Activated T-helper 1 cell treated with anti-CD3 and anti-CD28 coated beads, Interleukin-12 subunit alpha, Interleukin-12 subunit beta, Interleukin-2, Interleukin-4 antibody, amounts not matched to agents 30 ng/mL and 10 ng/mL and 1 ng/mL, durations not matched to agents 14 hours and 24 hours and 36 hours (primary cell): ENCODE measurements at regions of chr5 and their contacts with region 1.

Region 1: DNA sequence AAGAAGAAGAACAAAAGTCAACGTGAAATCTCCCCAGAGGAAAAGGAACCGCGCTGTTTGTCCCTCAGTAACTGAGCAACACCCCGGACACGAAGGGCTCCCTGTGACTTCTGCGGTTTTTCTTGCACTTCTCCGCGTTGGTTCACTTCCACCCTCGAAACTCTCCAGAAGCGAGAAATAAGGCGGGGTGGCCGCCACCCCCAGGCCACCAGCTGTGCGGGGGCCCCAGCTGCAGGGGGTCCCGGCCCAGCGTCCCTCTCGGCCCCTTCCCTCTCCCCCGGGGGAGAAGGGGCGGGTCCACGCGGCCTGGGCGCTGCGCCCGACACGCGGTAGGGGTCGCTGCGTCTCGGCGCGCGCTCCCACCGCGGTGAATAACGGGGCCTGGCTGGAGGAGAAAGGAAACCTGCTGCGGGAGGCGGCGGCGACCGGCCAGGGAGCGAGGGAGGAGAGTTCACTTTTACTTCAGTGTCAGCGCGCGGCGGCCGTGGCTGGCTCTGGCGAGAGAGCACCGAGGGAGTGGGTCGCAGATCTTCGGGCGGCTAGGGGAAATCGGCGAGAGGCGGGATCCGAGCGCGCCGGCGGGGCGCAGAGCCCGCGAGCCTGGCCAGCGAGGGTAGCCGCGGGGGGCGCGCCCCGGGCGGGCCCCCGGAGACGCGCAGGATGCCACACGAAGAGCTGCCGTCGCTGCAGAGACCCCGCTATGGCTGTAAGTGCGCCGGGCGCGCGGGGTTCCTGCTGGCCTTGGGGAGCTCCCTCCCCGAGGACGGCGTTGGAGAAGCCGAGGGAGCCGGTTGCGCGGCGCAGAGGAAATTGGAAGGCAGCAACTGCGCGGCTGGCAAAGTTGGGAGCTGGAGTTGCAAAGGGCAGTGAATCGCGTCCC is at the start of gene IQGAP2:
- DNase-seq: peak; percentile 79
- H3K4me3 Mint-ChIP-seq: peak within 1 kb of the TSS; percentile 98
- H3K27ac Mint-ChIP-seq: peak within 1 kb of the TSS; percentile 99
- H3K4me1 Mint-ChIP-seq: peaks cover 60% of the 10 kb centered on the region
- H3K27me3 Mint-ChIP-seq: peaks cover 4% of the 10 kb centered on the region
- total RNA-seq, gene IQGAP2: 43.5 and 45.4 TPM in 2 replicates

Region 2: DNA sequence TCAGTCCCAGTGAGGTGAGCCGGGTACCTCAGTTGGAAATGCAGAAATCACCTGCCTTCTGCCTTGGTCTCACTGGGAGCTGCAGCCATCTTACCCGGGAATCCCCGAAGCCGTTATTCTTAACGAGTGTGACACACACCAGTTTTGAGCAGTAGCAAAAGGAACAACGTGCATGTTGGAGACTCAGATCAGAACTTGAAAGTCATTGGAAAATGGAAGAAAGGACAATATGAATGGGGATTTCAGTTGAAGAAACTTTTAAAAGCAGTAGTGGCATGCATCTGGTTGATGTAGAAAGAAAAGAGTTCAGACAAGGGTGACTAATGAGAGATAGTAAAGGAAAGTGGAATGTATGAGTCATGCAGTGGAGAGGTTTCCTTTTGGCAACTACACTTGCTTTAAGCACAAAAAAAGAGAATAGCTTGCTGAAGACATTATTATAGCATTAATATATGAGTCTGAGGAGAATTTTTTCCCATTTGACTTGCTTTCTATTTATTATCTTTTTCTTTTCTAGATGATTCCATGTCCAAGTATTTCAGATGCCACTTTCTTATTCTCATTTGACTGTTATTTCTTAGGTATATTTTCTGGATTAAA is 836.3 kb before region 1 on chr5:
- intact Hi-C with region 1: loop called (anchors 2 kb)
- DNase-seq: peak; percentile 39
- H3K4me3 Mint-ChIP-seq: peak overlapping the region; percentile 29
- H3K27ac Mint-ChIP-seq: peak overlapping the region; percentile 81
- H3K4me1 Mint-ChIP-seq: peaks cover 53% of the 10 kb centered on the region
- H3K27me3 Mint-ChIP-seq: no peaks in the 10 kb centered on the region

Region 3: GRCh38 chr5:76325876-76326491 is 77.1 kb before region 1 on chr5:
- intact Hi-C with region 1: loop called (anchors 1 kb)
- DNase-seq: peak; percentile 50
- H3K4me3 Mint-ChIP-seq: peak overlapping the region; percentile 44
- H3K27ac Mint-ChIP-seq: peak overlapping the region; percentile 84
- H3K4me1 Mint-ChIP-seq: peaks cover 63% of the 10 kb centered on the region
- H3K27me3 Mint-ChIP-seq: no peaks in the 10 kb centered on the region

Region 4: GRCh38 chr5:76386360-76386759 is 16.8 kb before region 1 on chr5:
- intact Hi-C with region 1: no loop called
- DNase-seq: no peak
- H3K4me3 Mint-ChIP-seq: no peak overlapping the region
- H3K27ac Mint-ChIP-seq: no peak overlapping the region
- H3K4me1 Mint-ChIP-seq: peaks cover 37% of the 10 kb centered on the region
- H3K27me3 Mint-ChIP-seq: peaks cover 3% of the 10 kb centered on the region

Region 5: GRCh38 chr5:76433261-76433660 is 30.1 kb after region 1 on chr5:
- intact Hi-C with region 1: no loop called
- DNase-seq: no peak
- H3K4me3 Mint-ChIP-seq: no peak overlapping the region
- H3K27ac Mint-ChIP-seq: no peak overlapping the region
- H3K4me1 Mint-ChIP-seq: peaks cover 16% of the 10 kb centered on the region
- H3K27me3 Mint-ChIP-seq: no peaks in the 10 kb centered on the region

Region 6: GRCh38 chr5:76473661-76474060 is 70.5 kb after region 1 on chr5:
- intact Hi-C with region 1: loop called (anchors 1 kb)
- DNase-seq: peak; percentile 55
- H3K4me3 Mint-ChIP-seq: peak overlapping the region; percentile 47
- H3K27ac Mint-ChIP-seq: peak overlapping the region; percentile 82
- H3K4me1 Mint-ChIP-seq: peaks cover 73% of the 10 kb centered on the region
- H3K27me3 Mint-ChIP-seq: no peaks in the 10 kb centered on the region

Region 7: GRCh38 chr5:76608833-76609232 is 205.7 kb after region 1 on chr5:
- intact Hi-C with region 1: loop called (anchors 2 kb)
- DNase-seq: no peak
- H3K4me3 Mint-ChIP-seq: no peak overlapping the region
- H3K27ac Mint-ChIP-seq: peak overlapping the region; percentile 19
- H3K4me1 Mint-ChIP-seq: peaks cover 31% of the 10 kb centered on the region
- H3K27me3 Mint-ChIP-seq: no peaks in the 10 kb centered on the region

Region 8: GRCh38 chr5:76736679-76737556 is 333.8 kb after region 1 on chr5:
- intact Hi-C with region 1: loop called (anchors 2 kb)
- DNase-seq: no peak
- H3K4me3 Mint-ChIP-seq: no peak overlapping the region
- H3K27ac Mint-ChIP-seq: peak overlapping the region; percentile 57
- H3K4me1 Mint-ChIP-seq: peaks cover 63% of the 10 kb centered on the region
- H3K27me3 Mint-ChIP-seq: no peaks in the 10 kb centered on the region